PC-3 (cell line): ENCODE measurements at regions of chr1 and their contacts with region 1.

Region 1: GRCh38 chr1:88068407-88068960 is 615.6 kb upstream of the PKN2 start:
- DNase-seq: peak; percentile 83
- ATAC-seq: peak; percentile 93
- H3K4me3 ChIP-seq: no peak overlapping the region
- H3K27ac ChIP-seq: peak overlapping the region; percentile 67
- H3K4me1 ChIP-seq: peaks cover 13% of the 10 kb centered on the region
- H3K27me3 ChIP-seq: no peaks in the 10 kb centered on the region
- CTCF ChIP-seq: no peak

Region 2: GRCh38 chr1:88145752-88146151 is 77.3 kb after region 1 on chr1:
- CTCF ChIA-PET with region 1: no interaction called
- POLR2A ChIA-PET with region 1: no interaction called
- intact Hi-C with region 1: loop called (anchors 1 kb)
- DNase-seq: peak; percentile 67
- ATAC-seq: peak; percentile 99
- H3K4me3 ChIP-seq: no peak overlapping the region
- H3K27ac ChIP-seq: peak overlapping the region; percentile 75
- H3K4me1 ChIP-seq: peaks cover 18% of the 10 kb centered on the region
- H3K27me3 ChIP-seq: no peaks in the 10 kb centered on the region
- CTCF ChIP-seq: no peak